ENCODE measurements at regions of chr19 and their contacts with region 1.

Region 1: GRCh38 chr19:33241530-33242101 is 16.0 kb upstream of the SLC7A10 start:
- DNase-seq: peak in 2 of 3 donors; percentile 68 to 71
- ATAC-seq: peak; percentile 63 to 68 (median 64)
- H3K4me3 ChIP-seq: peak overlapping the region in 2 of 3 donors; percentile 25 to 46
- H3K27ac ChIP-seq: peak overlapping the region in 2 of 3 donors; percentile 48 to 62
- H3K4me1 ChIP-seq: peaks cover 0 to 20% (median 10%) of the 10 kb centered on the region in 4 donors
- H3K27me3 ChIP-seq: no peaks in the 10 kb centered on the region
- CTCF ChIP-seq: peak; percentile 72 to 94 (median 90)
- POLR2A ChIP-seq: no peak

Region 2: GRCh38 chr19:33132425-33132824 is 109.2 kb before region 1 on chr19:
- intact Hi-C with region 1: no loop called
- DNase-seq: peak in 1 of 3 donors; percentile 41
- ATAC-seq: peak in 2 of 4 donors; percentile 50
- H3K4me3 ChIP-seq: no peak overlapping the region
- H3K27ac ChIP-seq: no peak overlapping the region
- H3K4me1 ChIP-seq: no peaks in the 10 kb centered on the region
- H3K27me3 ChIP-seq: no peaks in the 10 kb centered on the region
- CTCF ChIP-seq: peak in 1 of 4 donors; percentile 9
- POLR2A ChIP-seq: no peak

Region 3: GRCh38 chr19:33193865-33194362 is 47.7 kb before region 1 on chr19 and contains the start of gene LRP3:
- intact Hi-C with region 1: no loop called
- DNase-seq: peak in 2 of 3 donors; percentile 75 to 81
- ATAC-seq: peak; percentile 60 to 78 (median 68)
- H3K4me3 ChIP-seq: peak within 1 kb of the TSS; percentile 67 to 70 (median 69)
- H3K27ac ChIP-seq: peak within 1 kb of the TSS in 2 of 3 donors; percentile 31 to 68
- H3K4me1 ChIP-seq: peaks cover 0 to 6% (median 0%) of the 10 kb centered on the region in 4 donors
- H3K27me3 ChIP-seq: no peaks in the 10 kb centered on the region
- CTCF ChIP-seq: no peak
- POLR2A ChIP-seq: no peak
- total RNA-seq, gene LRP3: 25.2 to 40.7 (median 33.7) TPM

Region 4: DNA sequence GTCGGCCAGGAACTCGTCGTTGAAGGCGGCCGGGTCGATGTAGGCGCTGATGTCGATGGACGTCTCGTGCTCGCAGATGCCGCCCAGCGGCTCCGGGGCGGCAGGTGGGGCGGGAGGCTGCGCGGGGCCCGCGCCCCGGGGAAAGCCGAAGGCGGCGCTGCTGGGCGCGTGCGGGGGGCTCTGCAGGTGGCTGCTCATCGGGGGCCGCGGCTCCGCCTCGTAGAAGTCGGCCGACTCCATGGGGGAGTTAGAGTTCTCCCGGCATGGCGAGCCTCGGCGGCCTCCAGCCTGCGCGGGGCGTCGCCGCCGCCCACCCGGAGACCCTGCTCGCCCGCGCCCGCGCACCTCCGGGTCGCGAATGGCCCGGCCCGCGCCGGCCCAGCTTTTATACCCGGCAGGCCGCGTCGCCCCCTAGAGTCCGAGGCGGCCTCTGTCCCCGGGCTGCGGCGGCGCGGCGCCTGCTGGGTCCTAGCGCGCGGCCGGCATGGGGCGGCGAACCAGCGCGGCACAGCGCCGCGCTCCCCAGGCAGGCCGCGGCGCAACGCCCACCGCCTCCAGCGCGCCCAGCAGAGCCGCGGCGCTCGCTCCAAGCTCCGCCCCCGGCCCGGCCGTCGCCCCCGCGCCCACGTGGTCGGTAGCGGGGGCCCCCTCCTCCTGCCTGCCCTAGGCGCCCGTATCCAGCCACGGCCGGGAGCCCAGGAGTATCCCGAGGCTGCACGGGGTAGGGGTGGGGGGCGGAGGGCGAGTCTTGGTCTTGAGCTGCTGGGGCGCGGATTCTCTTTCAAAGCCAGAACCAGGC is 60.8 kb after region 1 on chr19 and contains the start of gene CEBPA:
- intact Hi-C with region 1: loop called (anchors 5 to 10 kb)
- DNase-seq: peak; percentile 89 to 94 (median 93)
- ATAC-seq: peak; percentile 55 to 77 (median 64)
- H3K4me3 ChIP-seq: peak within 1 kb of the TSS; percentile 86 to 96 (median 93)
- H3K27ac ChIP-seq: peak within 1 kb of the TSS; percentile 94 to 99 (median 95)
- H3K4me1 ChIP-seq: peaks cover 0 to 53% (median 8%) of the 10 kb centered on the region in 4 donors
- H3K27me3 ChIP-seq: no peaks in the 10 kb centered on the region
- CTCF ChIP-seq: peak; percentile 35 to 88 (median 52)
- POLR2A ChIP-seq: peak; percentile 100
- total RNA-seq, gene CEBPA: 53.9 to 163 (median 119) TPM